Spleen (tissue), 13 donors: ENCODE measurements at regions of chr1 and their contacts with region 1.

Region 1: GRCh38 chr1:171588230-171588629 is 33.8 kb upstream of the MYOCOS start:
- DNase-seq: no peak
- H3K4me3 ChIP-seq: no peak overlapping the region
- H3K27ac ChIP-seq: no peak overlapping the region
- H3K4me1 ChIP-seq: no peaks in the 10 kb centered on the region
- H3K27me3 ChIP-seq: no peaks in the 10 kb centered on the region
- CTCF ChIP-seq: no peak
- POLR2A ChIP-seq: no peak

Region 2: DNA sequence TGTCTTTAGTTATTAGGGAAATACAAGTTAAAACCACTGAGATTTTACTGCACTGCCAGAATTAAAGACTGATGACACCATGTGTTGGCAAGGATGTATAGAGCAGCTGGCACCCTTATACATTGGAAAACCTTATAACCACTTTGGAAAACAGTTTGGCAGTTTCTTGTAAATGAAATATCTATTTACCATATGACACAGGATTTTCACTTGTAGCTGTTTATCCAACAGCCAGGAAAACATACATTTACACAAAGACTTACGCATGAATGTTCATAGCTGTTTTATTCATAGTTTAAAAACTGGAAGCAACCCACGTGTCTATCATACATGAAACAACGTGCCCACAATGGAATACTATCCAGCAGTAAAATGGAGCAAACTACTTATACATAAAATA is 57.6 kb before region 1 on chr1:
- intact Hi-C with region 1: loop called (anchors 5 kb)
- DNase-seq: no peak
- H3K4me3 ChIP-seq: no peak overlapping the region
- H3K27ac ChIP-seq: no peak overlapping the region
- H3K4me1 ChIP-seq: no peaks in the 10 kb centered on the region
- H3K27me3 ChIP-seq: no peaks in the 10 kb centered on the region
- CTCF ChIP-seq: no peak
- POLR2A ChIP-seq: no peak